ENCODE measurements at regions of chr1 and their contacts with region 1.

Region 1: GRCh38 chr1:225474986-225475820 is 47.4 kb upstream of the LBR start:
- DNase-seq: peak; percentile 75 to 81 (median 76)
- ATAC-seq: peak; percentile 96 to 100 (median 98)
- H3K4me3 ChIP-seq: no peak overlapping the region
- H3K27ac ChIP-seq: no peak overlapping the region
- H3K4me1 ChIP-seq: peaks cover 0 to 4% (median 0%) of the 10 kb centered on the region in 4 donors
- H3K27me3 ChIP-seq: no peaks in the 10 kb centered on the region
- CTCF ChIP-seq: peak in 3 of 4 donors; percentile 100
- POLR2A ChIP-seq: no peak

Region 2: GRCh38 chr1:225652729-225653462 is 177.7 kb after region 1 on chr1 and contains the start of gene ENAH:
- intact Hi-C with region 1: loop called in 1 of 2 experiments (anchors 10 kb)
- DNase-seq: peak; percentile 78 to 83 (median 80)
- ATAC-seq: peak; percentile 83 to 93 (median 91)
- H3K4me3 ChIP-seq: peak within 1 kb of the TSS; percentile 70 to 82 (median 74)
- H3K27ac ChIP-seq: peak within 1 kb of the TSS; percentile 75 to 82 (median 78)
- H3K4me1 ChIP-seq: no peaks in the 10 kb centered on the region
- H3K27me3 ChIP-seq: no peaks in the 10 kb centered on the region
- CTCF ChIP-seq: no peak
- POLR2A ChIP-seq: peak; percentile 86
- total RNA-seq, gene ENAH: 9.0 to 33.2 (median 20.8) TPM

Region 3: DNA sequence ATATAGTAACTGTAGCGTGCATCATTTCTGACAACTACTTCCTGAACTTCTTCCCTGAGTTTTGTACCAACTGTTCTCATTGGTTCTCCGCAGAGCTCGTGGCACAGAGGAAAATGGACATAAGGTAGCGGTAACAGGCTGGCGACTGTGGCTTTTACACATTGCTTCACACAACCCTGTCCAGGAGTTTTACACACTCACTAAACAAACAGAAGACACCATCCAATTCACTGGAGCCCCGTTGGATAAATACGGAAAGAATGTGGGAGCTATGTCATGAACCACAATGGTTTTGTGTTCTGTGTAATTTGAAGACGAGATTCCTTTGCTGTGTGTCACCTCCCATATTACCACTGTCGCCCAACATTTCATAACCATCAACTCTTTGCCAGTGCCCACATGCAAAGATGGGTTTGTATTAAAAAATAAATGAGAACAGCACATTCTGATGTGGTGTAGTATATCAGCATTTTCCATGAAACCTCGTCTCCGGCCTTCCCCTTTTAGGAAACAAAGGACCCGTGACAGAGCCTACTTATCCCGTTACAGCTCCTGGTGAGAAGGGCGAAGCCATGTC is 225.0 kb after region 1 on chr1:
- intact Hi-C with region 1: no loop called
- DNase-seq: no peak
- ATAC-seq: peak in 3 of 4 donors; percentile 16 to 32 (median 22)
- H3K4me3 ChIP-seq: no peak overlapping the region
- H3K27ac ChIP-seq: no peak overlapping the region
- H3K4me1 ChIP-seq: peaks cover 0 to 13% (median 6%) of the 10 kb centered on the region in 4 donors
- H3K27me3 ChIP-seq: no peaks in the 10 kb centered on the region
- CTCF ChIP-seq: no peak
- POLR2A ChIP-seq: no peak

Region 4: GRCh38 chr1:225977937-225978748 is 502.9 kb after region 1 on chr1:
- intact Hi-C with region 1: loop called in 1 of 2 experiments (anchors 10 kb)
- DNase-seq: no peak
- ATAC-seq: no peak
- H3K4me3 ChIP-seq: no peak overlapping the region
- H3K27ac ChIP-seq: no peak overlapping the region
- H3K4me1 ChIP-seq: no peaks in the 10 kb centered on the region
- H3K27me3 ChIP-seq: no peaks in the 10 kb centered on the region
- CTCF ChIP-seq: no peak
- POLR2A ChIP-seq: no peak

Region 5: DNA sequence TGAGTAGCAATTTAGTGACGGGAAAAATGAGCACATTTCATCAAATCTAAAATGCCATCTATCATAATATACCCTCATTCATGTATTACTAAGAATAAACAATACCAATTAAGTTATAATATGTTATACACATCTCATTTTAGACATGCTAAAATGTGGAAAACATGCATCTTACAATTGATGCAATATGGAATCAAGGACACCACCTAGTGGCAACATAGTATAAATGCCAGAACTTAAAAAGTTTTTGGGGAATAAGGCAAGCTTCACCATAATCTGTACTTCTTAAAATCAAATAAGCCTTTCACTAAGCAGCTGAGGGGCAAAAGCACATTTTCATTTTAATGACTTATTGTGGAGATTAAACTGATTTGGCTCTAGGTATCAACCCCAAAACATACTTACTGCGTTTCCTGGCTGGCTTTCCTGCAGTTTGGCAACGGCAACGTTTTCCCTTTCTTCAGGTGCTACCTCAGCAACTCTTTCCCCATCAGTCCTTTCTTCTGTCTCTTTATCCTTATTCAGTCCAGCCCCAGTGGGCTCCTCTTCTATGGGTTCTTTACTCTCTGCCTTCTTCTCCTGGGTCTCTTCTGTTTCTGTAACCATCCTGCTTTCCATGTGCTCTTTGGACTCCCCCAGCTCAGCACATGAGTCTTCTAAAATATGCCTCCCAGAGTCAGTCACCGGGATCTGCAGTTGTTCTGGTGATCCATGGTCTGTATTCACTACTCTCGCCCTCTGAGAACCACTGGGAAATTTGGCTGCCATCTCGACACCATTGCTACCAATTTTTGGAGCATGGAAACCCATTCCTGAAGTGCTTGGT is 512.5 kb after region 1 on chr1:
- intact Hi-C with region 1: loop called in 1 of 2 experiments (anchors 5 kb)
- DNase-seq: no peak
- ATAC-seq: peak in 3 of 4 donors; percentile 65 to 75 (median 73)
- H3K4me3 ChIP-seq: no peak overlapping the region
- H3K27ac ChIP-seq: no peak overlapping the region
- H3K4me1 ChIP-seq: no peaks in the 10 kb centered on the region
- H3K27me3 ChIP-seq: no peaks in the 10 kb centered on the region
- CTCF ChIP-seq: peak; percentile 59 to 79 (median 76)
- POLR2A ChIP-seq: no peak

Measured in right lobe of liver (tissue), 6 donors.